PC-3 (cell line): ENCODE measurements at regions of chr4 and their contacts with region 1.

Region 1: DNA sequence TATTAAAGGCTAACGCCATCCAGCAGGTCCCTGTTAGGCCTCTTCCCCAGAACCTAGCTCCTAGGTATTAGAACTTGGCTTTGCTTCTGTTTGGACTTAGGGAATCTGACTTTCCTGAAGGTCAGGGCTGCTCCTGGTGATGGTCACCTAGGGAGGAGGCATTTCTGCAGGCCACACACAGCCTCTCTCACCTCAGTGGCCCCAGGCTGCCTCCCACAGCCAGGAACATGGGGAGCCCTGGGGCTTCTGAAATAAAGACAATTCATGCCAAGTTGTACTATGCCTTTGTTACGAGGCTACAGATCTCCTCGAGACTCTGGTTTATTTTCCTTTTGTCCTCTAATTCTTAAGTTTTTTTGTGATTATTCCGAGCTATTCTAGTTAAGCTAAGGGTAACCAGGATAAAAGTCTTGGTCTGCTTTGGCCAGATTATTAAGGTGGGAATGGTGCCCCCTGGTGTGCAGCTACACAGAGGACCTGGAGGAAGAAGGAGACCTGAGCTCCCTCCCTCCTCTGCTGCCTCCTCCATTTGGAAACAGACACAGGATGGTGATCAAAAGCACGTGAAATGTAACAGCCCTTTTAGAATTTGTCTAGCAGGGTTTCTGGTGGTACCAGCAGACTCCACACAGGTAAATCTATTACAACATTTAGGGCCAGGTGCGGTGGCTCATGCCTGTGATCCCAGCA is 131.0 kb downstream of the DCLK2 start:
- DNase-seq: peak; percentile 72
- ATAC-seq: peak; percentile 89
- H3K4me3 ChIP-seq: no peak overlapping the region
- H3K27ac ChIP-seq: no peak overlapping the region
- H3K4me1 ChIP-seq: peaks cover 8% of the 10 kb centered on the region; the same call in 1 of the 2 replicates
- H3K27me3 ChIP-seq: no peaks in the 10 kb centered on the region
- CTCF ChIP-seq: peak; percentile 75

Region 2: GRCh38 chr4:149999485-150000074 is 209.7 kb before region 1 on chr4:
- CTCF ChIA-PET with region 1: interaction called, 11 read pairs
- POLR2A ChIA-PET with region 1: no interaction called
- intact Hi-C with region 1: loop called (anchors 2 kb)
- DNase-seq: peak; percentile 60
- ATAC-seq: no peak
- H3K4me3 ChIP-seq: no peak overlapping the region
- H3K27ac ChIP-seq: no peak overlapping the region
- H3K4me1 ChIP-seq: peaks cover 19% of the 10 kb centered on the region
- H3K27me3 ChIP-seq: no peaks in the 10 kb centered on the region
- CTCF ChIP-seq: peak; percentile 75

Region 3: GRCh38 chr4:150010525-150011126 is 198.7 kb before region 1 on chr4:
- CTCF ChIA-PET with region 1: interaction called, 6 read pairs
- POLR2A ChIA-PET with region 1: no interaction called
- intact Hi-C with region 1: loop called (anchors 1 kb)
- DNase-seq: peak; percentile 69
- ATAC-seq: peak; percentile 87
- H3K4me3 ChIP-seq: no peak overlapping the region
- H3K27ac ChIP-seq: no peak overlapping the region
- H3K4me1 ChIP-seq: no peaks in the 10 kb centered on the region
- H3K27me3 ChIP-seq: no peaks in the 10 kb centered on the region
- CTCF ChIP-seq: peak; percentile 59

Region 4: DNA sequence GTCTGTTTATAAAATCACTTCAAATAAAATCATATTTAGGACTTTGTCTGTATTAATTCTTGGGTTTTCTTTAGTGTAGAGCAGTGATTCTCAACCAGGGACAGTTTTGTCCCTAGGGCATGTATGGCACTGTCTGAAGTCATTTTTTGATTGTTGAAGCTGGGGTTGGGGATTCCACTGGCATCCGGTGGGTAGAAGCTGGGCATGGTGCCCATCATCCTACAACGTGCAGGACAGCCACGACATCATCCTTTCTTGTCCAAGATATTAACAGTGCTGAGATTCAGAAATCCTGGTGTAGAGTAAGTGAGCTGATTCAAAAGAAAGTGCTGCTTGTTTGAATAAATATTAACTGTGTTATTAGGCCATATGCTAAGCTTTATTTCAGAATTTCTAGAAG is 102.4 kb before region 1 on chr4:
- CTCF ChIA-PET with region 1: no interaction called
- POLR2A ChIA-PET with region 1: no interaction called
- intact Hi-C with region 1: loop called (anchors 2 kb)
- DNase-seq: no peak
- ATAC-seq: no peak
- H3K4me3 ChIP-seq: no peak overlapping the region
- H3K27ac ChIP-seq: no peak overlapping the region
- H3K4me1 ChIP-seq: no peaks in the 10 kb centered on the region
- H3K27me3 ChIP-seq: no peaks in the 10 kb centered on the region
- CTCF ChIP-seq: no peak